ENCODE measurements at regions of chr7 and their contacts with region 1.

Region 1: DNA sequence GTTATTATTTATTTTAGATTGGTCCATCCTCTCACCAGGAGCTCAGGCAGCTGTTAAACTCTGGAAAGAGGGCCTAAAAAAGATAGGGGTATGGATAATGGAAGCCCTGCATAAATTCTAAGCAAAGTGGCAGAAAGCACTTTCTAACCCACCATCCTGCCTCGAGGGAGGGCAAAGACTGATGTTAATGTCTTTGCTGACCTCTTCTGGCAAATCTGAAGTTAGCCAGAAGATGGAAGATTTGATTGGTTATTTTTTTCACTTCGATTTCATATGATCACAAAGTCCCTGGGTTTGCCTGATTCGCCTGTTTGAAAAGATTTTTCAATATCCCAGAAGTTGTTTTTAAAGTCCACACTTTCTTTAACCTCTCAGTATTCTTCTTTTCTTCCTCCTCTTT is 24.8 kb downstream of the OR9A2 start:
- DNase-seq: peak; percentile 24
- ATAC-seq: peak; percentile 80
- H3K4me3 ChIP-seq: no peak overlapping the region
- H3K27ac ChIP-seq: no peak overlapping the region
- H3K4me1 ChIP-seq: peaks cover 0 to 8% of the 10 kb centered on the region in 2 experiments; a peak in 1 of 4 replicates
- H3K27me3 ChIP-seq: no peaks in the 10 kb centered on the region
- CTCF ChIP-seq: peak; percentile 37 to 77 (median 58); a peak in 5 of 6 replicates
- POLR2A ChIP-seq: no peak
- RAD21 ChIP-seq: peak; percentile 83

Region 2: GRCh38 chr7:142873281-142873787 is 128.8 kb before region 1 on chr7:
- CTCF ChIA-PET with region 1: interaction called, 22 read pairs
- POLR2A ChIA-PET with region 1: no interaction called
- RAD21 ChIA-PET with region 1: interaction called in 1 of 2 experiments, 3 read pairs
- intact Hi-C with region 1: loop called (anchors 2 kb)
- DNase-seq: peak; percentile 28
- ATAC-seq: peak; percentile 94
- H3K4me3 ChIP-seq: no peak overlapping the region
- H3K27ac ChIP-seq: no peak overlapping the region
- H3K4me1 ChIP-seq: no peaks in the 10 kb centered on the region
- H3K27me3 ChIP-seq: no peaks in the 10 kb centered on the region
- CTCF ChIP-seq: peak; percentile 76 to 93 (median 90)
- POLR2A ChIP-seq: no peak
- RAD21 ChIP-seq: peak; percentile 40; the same call in 1 of the 2 replicates

Region 3: DNA sequence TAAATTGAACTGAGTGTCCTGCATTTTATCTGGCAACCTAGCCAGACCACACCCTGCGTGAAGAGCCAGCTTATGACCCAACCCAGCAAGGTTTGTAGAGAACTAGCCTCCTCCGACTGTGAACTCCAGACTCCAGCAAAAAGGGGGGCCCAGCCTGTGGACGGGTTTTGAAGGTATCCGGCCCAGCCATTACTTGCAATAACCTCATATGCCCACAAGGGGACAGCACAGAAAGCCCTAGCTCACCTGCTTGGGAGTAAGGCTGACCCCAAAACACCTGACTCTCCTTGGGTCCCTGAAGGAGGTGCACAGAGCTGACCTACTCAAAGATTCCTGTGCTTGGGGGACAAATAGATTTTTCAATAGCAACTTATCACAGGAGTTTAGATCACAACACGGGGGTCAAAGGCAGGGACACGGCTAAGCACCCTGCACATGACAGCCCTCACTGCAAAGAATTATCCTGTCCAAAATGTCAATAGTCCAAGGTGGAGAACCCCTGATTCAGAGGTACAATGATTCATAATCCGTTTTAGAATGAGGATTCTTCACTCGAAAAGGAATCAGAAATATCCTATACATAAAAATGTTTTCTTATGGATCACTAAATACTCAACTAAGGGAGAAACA is 121.1 kb before region 1 on chr7:
- CTCF ChIA-PET with region 1: interaction called, 26 read pairs
- POLR2A ChIA-PET with region 1: no interaction called
- RAD21 ChIA-PET with region 1: interaction called, 3 to 4 read pairs
- intact Hi-C with region 1: loop called (anchors 2 kb)
- DNase-seq: peak; percentile 37
- ATAC-seq: peak; percentile 74
- H3K4me3 ChIP-seq: no peak overlapping the region
- H3K27ac ChIP-seq: no peak overlapping the region
- H3K4me1 ChIP-seq: peaks cover 3 to 9% of the 10 kb centered on the region in 2 experiments; a peak in 3 of 4 replicates
- H3K27me3 ChIP-seq: peaks cover 6% of the 10 kb centered on the region; the same call in 1 of the 2 replicates
- CTCF ChIP-seq: peak; percentile 81 to 92 (median 90)
- POLR2A ChIP-seq: no peak
- RAD21 ChIP-seq: peak; percentile 70

Measured in HCT116 (cell line).